Activated B cell treated with CpG ODN at 0.5 μM for 24 hours (primary cell): ENCODE measurements at regions of chrX and their contacts with region 1.

Region 1: GRCh38 chrX:37745354-37745753 is 34.5 kb upstream of the CYBB start:
- DNase-seq: peak; percentile 61
- ATAC-seq: peak; percentile 64
- H3K4me3 Mint-ChIP-seq: peak overlapping the region; percentile 33
- H3K27ac Mint-ChIP-seq: peak overlapping the region; percentile 92
- H3K4me1 Mint-ChIP-seq: peaks cover 26% of the 10 kb centered on the region
- H3K27me3 Mint-ChIP-seq: no peaks in the 10 kb centered on the region
- CTCF ChIP-seq: no peak

Region 2: GRCh38 chrX:37509349-37509748 is 236.0 kb before region 1 on chrX:
- CTCF ChIA-PET with region 1: no interaction called
- POLR2A ChIA-PET with region 1: interaction called, 5 read pairs
- intact Hi-C with region 1: loop called (anchors 1 kb)
- DNase-seq: no peak
- ATAC-seq: no peak
- H3K4me3 Mint-ChIP-seq: no peak overlapping the region
- H3K27ac Mint-ChIP-seq: no peak overlapping the region
- H3K4me1 Mint-ChIP-seq: no peaks in the 10 kb centered on the region
- H3K27me3 Mint-ChIP-seq: no peaks in the 10 kb centered on the region
- CTCF ChIP-seq: no peak

Region 3: GRCh38 chrX:37781814-37782213 is 36.5 kb after region 1 on chrX:
- CTCF ChIA-PET with region 1: interaction called, 35 read pairs
- POLR2A ChIA-PET with region 1: interaction called, 80 read pairs
- intact Hi-C with region 1: loop called (anchors 1 kb)
- DNase-seq: no peak
- ATAC-seq: no peak
- H3K4me3 Mint-ChIP-seq: peak overlapping the region; percentile 86
- H3K27ac Mint-ChIP-seq: peak overlapping the region; percentile 89
- H3K4me1 Mint-ChIP-seq: peaks cover 66% of the 10 kb centered on the region
- H3K27me3 Mint-ChIP-seq: no peaks in the 10 kb centered on the region
- CTCF ChIP-seq: no peak

Region 4: DNA sequence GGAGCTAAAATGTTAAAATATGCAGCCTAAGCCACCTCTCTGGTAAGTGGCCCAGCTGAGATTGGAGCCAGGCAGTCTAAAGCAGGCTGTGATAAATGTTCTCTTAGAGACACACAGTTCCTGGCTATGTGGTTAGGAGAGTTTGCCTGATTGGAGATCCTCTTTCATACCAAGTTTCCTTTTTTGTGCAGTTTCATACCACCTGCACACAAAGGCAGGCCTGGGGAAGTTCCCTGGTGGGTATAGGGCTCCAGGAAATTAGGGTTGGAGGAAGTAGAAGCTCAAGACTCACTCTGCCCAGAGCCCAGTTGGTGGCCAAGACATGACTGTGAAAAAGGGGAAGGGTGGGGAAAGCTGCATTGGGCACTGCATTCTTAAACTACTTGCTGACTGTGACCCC is 51.5 kb after region 1 on chrX:
- CTCF ChIA-PET with region 1: interaction called, 7 read pairs
- POLR2A ChIA-PET with region 1: interaction called, 20 read pairs
- intact Hi-C with region 1: no loop called
- DNase-seq: no peak
- ATAC-seq: peak; percentile 90
- H3K4me3 Mint-ChIP-seq: peak overlapping the region; percentile 28
- H3K27ac Mint-ChIP-seq: peak overlapping the region; percentile 79
- H3K4me1 Mint-ChIP-seq: peaks cover 79% of the 10 kb centered on the region
- H3K27me3 Mint-ChIP-seq: no peaks in the 10 kb centered on the region
- CTCF ChIP-seq: no peak

Region 5: DNA sequence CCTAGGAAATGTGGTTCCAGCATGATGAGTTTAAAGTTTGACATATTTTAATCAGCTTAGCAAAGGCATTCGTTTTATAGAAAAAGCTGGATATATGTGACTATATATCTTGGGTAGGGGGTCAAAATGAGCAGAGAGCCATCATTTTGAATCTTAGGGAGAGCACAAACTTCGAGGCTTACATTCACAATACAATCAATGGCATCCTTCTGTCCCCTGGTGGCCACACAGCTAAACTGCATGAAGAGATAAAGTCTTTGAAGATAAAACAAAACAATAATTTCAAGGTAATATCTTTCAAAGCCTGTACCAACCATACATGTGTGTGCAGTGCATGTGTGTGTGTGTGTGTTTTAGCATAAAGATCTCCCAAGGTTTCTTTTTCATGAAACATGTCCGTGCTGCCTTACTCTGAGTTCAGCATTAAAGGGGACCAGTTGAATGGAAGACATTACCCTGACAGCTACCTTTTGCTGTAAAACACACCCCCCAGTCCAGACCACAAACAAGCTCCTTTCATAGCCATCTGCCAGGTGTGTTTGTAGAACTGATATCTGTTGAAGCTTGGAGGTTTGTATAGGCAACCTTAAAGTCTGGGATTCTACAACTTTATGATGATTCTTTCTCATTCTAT is 80.0 kb after region 1 on chrX:
- CTCF ChIA-PET with region 1: interaction called, 208 read pairs
- POLR2A ChIA-PET with region 1: interaction called, 83 read pairs
- intact Hi-C with region 1: loop called (anchors 1 kb)
- DNase-seq: no peak
- ATAC-seq: peak; percentile 79
- H3K4me3 Mint-ChIP-seq: no peak overlapping the region
- H3K27ac Mint-ChIP-seq: peak overlapping the region; percentile 81
- H3K4me1 Mint-ChIP-seq: peaks cover 48% of the 10 kb centered on the region
- H3K27me3 Mint-ChIP-seq: no peaks in the 10 kb centered on the region
- CTCF ChIP-seq: no peak